ENCODE measurements at regions of chr19 and their contacts with region 1.

Region 1: GRCh38 chr19:13597640-13598039 is 91.4 kb upstream of the CACNA1A start:
- DNase-seq: peak; percentile 29 to 33
- H3K4me3 ChIP-seq: no peak overlapping the region
- H3K27ac ChIP-seq: no peak overlapping the region
- H3K4me1 ChIP-seq: no peaks in the 10 kb centered on the region
- H3K27me3 ChIP-seq: no peaks in the 10 kb centered on the region
- CTCF ChIP-seq: peak; percentile 45 to 63 (median 60)
- POLR2A ChIP-seq: no peak

Region 2: GRCh38 chr19:13861732-13862531 is 264.3 kb after region 1 on chr19:
- intact Hi-C with region 1: loop called (anchors 10 kb)
- DNase-seq: peak; percentile 95 to 97
- H3K4me3 ChIP-seq: peak overlapping the region; percentile 27 to 31
- H3K27ac ChIP-seq: peak overlapping the region; percentile 86 to 96
- H3K4me1 ChIP-seq: peaks cover 0 to 12% of the 10 kb centered on the region in 2 donors
- H3K27me3 ChIP-seq: no peaks in the 10 kb centered on the region
- CTCF ChIP-seq: peak; percentile 95 to 99 (median 98)
- POLR2A ChIP-seq: peak in 1 of 2 donors; percentile 50

Region 3: DNA sequence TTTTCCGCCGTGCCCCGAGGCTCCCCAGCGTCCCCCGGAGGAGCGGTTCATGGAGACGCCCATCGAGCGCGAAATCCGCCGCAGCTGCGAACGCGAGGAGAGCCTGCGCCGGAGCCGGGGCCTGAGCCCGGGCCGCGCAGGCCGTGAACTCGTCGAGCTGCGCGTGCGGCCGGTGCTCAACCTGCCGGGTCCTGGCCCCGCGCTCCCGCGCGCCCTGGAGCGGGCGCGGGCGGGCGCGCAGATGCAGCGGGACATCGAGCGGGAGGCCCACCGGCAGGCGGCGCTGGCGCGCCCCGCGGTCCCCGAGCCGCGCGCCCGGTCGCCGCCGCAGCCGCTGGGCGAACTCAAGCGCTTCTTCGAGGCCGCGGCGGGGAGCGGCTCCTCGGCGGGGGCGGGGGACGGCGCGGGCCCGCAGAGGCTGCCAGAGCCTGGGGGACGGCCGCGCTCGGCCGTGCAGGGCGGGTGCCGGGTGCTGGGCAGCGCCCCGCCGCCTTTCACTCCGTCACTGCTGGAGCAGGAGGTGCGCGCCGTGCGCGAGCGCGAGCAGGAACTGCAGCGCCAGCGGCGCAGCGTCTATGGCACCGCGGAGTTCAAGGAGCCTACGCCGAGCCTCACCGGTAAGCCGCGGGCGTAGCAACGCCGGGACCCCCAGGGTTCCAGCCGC is 475.8 kb after region 1 on chr19:
- intact Hi-C with region 1: loop called (anchors 5 kb)
- DNase-seq: peak; percentile 51 to 69
- H3K4me3 ChIP-seq: peak overlapping the region; percentile 41 to 59
- H3K27ac ChIP-seq: peak overlapping the region; percentile 83 to 89
- H3K4me1 ChIP-seq: peaks cover 0 to 4% of the 10 kb centered on the region in 2 donors
- H3K27me3 ChIP-seq: no peaks in the 10 kb centered on the region
- CTCF ChIP-seq: peak in 3 of 4 experiments; percentile 64 to 97 (median 93)
- POLR2A ChIP-seq: peak in 1 of 2 donors; percentile 53

Measured in uterus (tissue), 4 donors.